ENCODE measurements at regions of chr7 and their contacts with region 1.

Region 1: GRCh38 chr7:70693686-70694360 is 438.1 kb upstream of the GALNT17 start:
- DNase-seq: peak; percentile 82 to 84
- H3K4me3 ChIP-seq: peak overlapping the region; percentile 66
- H3K4me3 Mint-ChIP-seq: peak overlapping the region; percentile 85
- H3K27ac Mint-ChIP-seq: peak overlapping the region; percentile 48
- H3K4me1 ChIP-seq: peaks cover 8% of the 10 kb centered on the region; the same call in 1 of the 2 replicates
- H3K4me1 Mint-ChIP-seq: peaks cover 6% of the 10 kb centered on the region
- H3K27me3 ChIP-seq: no peaks in the 10 kb centered on the region
- H3K27me3 Mint-ChIP-seq: no peaks in the 10 kb centered on the region
- CTCF ChIP-seq: no peak

Region 2: GRCh38 chr7:70165477-70166170 is 528.2 kb before region 1 on chr7:
- CTCF ChIA-PET with region 1: no interaction called
- POLR2A ChIA-PET with region 1: no interaction called
- intact Hi-C with region 1: loop called (anchors 10 kb)
- DNase-seq: no peak
- H3K4me3 ChIP-seq: no peak overlapping the region
- H3K4me3 Mint-ChIP-seq: no peak overlapping the region
- H3K27ac Mint-ChIP-seq: no peak overlapping the region
- H3K4me1 ChIP-seq: no peaks in the 10 kb centered on the region
- H3K4me1 Mint-ChIP-seq: no peaks in the 10 kb centered on the region
- H3K27me3 ChIP-seq: no peaks in the 10 kb centered on the region
- H3K27me3 Mint-ChIP-seq: no peaks in the 10 kb centered on the region
- CTCF ChIP-seq: no peak

Region 3: GRCh38 chr7:70208236-70209063 is 485.4 kb before region 1 on chr7:
- CTCF ChIA-PET with region 1: no interaction called
- POLR2A ChIA-PET with region 1: no interaction called
- intact Hi-C with region 1: loop called (anchors 5 kb)
- DNase-seq: peak; percentile 85 to 93
- H3K4me3 ChIP-seq: no peak overlapping the region
- H3K4me3 Mint-ChIP-seq: no peak overlapping the region
- H3K27ac Mint-ChIP-seq: no peak overlapping the region
- H3K4me1 ChIP-seq: peaks cover 73% of the 10 kb centered on the region
- H3K4me1 Mint-ChIP-seq: peaks cover 14% of the 10 kb centered on the region
- H3K27me3 ChIP-seq: no peaks in the 10 kb centered on the region
- H3K27me3 Mint-ChIP-seq: no peaks in the 10 kb centered on the region
- CTCF ChIP-seq: no peak

Region 4: DNA sequence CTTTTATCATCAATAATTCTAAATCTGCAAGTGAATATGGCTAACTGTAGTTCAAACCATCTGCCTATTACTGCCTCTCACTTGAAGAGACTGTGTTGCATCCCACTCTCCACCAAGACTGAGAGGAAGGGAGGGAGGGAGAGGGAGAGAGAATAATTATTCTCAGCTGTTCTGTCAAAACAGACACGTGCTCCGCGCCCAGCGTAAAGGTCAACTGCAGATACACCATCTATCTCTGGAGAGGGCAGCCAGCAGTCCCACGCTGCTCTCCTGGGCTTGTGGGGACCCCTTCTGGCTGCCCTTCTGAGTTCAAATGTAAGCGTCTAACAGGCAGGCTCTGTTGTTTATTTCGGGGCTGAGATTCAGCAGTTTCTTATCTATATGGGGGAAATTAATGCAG is 187.4 kb before region 1 on chr7:
- CTCF ChIA-PET with region 1: interaction called, 3 read pairs
- POLR2A ChIA-PET with region 1: no interaction called
- intact Hi-C with region 1: loop called (anchors 1 kb)
- DNase-seq: peak; percentile 69 to 73
- H3K4me3 ChIP-seq: no peak overlapping the region
- H3K4me3 Mint-ChIP-seq: no peak overlapping the region
- H3K27ac Mint-ChIP-seq: no peak overlapping the region
- H3K4me1 ChIP-seq: no peaks in the 10 kb centered on the region
- H3K4me1 Mint-ChIP-seq: no peaks in the 10 kb centered on the region
- H3K27me3 ChIP-seq: no peaks in the 10 kb centered on the region
- H3K27me3 Mint-ChIP-seq: no peaks in the 10 kb centered on the region
- CTCF ChIP-seq: peak; percentile 51 to 79

Region 5: GRCh38 chr7:70571403-70571934 is 122.4 kb before region 1 on chr7:
- CTCF ChIA-PET with region 1: no interaction called
- POLR2A ChIA-PET with region 1: interaction called, 5 read pairs
- intact Hi-C with region 1: loop called (anchors 5 kb)
- DNase-seq: peak; percentile 66 to 68
- H3K4me3 ChIP-seq: peak overlapping the region; percentile 25
- H3K4me3 Mint-ChIP-seq: peak overlapping the region; percentile 4
- H3K27ac Mint-ChIP-seq: peak overlapping the region; percentile 92
- H3K4me1 ChIP-seq: peaks cover 28% of the 10 kb centered on the region
- H3K4me1 Mint-ChIP-seq: peaks cover 40% of the 10 kb centered on the region
- H3K27me3 ChIP-seq: no peaks in the 10 kb centered on the region
- H3K27me3 Mint-ChIP-seq: no peaks in the 10 kb centered on the region
- CTCF ChIP-seq: no peak

Measured in Caco-2 (cell line).